Endothelial cell of umbilical vein (primary cell): ENCODE measurements at regions of chr4 and their contacts with region 1.

Region 1: GRCh38 chr4:90293320-90293719 is 166.1 kb downstream of the CCSER1 start:
- DNase-seq: peak; percentile 23
- H3K4me3 ChIP-seq: no peak overlapping the region
- H3K27ac ChIP-seq: no peak overlapping the region
- H3K4me1 ChIP-seq: no peaks in the 10 kb centered on the region
- H3K27me3 ChIP-seq: no peaks in the 10 kb centered on the region
- CTCF ChIP-seq: peak; percentile 11 to 13
- POLR2A ChIP-seq: no peak

Region 2: GRCh38 chr4:89434364-89434988 is 858.8 kb before region 1 on chr4:
- CTCF ChIA-PET with region 1: interaction called, 5 read pairs
- POLR2A ChIA-PET with region 1: no interaction called
- dilution Hi-C with region 1: no loop called
- intact Hi-C with region 1: loop called (anchors 5 kb)
- DNase-seq: peak; percentile 46
- H3K4me3 ChIP-seq: no peak overlapping the region
- H3K27ac ChIP-seq: no peak overlapping the region
- H3K4me1 ChIP-seq: no peaks in the 10 kb centered on the region
- H3K27me3 ChIP-seq: peaks cover 0 to 2% of the 10 kb centered on the region in 2 experiments
- CTCF ChIP-seq: peak; percentile 38 to 62
- POLR2A ChIP-seq: no peak

Region 3: DNA sequence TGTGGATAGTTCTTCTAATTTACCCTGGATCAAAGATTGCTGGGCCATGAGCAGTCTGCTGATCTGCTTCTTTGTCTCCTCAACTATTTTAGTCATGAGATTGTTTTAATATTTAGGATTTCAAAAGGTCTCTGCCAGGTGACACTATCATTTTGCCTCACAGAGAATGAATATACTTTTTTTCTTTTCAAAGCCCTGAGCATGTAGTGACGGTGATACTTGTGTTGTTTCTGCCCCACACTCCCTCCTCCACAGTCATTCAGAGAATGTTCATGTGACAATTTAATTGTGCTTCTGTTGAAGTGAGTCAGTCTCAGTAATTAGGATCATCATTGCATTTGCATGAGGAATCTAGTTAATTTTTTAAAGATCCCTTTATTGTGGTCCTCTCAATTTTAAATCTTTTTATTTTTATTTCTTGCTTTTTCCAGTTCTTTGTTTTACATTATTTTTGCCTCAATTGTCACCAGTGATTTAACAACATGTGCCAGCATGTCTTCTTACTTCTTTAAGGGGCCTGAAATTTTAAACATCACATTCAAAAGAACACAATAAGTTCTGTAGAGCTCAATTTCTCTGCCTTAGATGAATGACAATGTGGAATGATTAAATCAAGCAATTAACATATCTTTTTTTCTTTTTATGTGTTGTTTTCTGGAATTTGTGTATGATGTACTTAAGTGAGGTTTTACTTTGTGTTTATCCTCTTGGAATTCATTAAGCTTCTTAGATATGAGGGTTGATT is 386.4 kb before region 1 on chr4:
- CTCF ChIA-PET with region 1: no interaction called
- POLR2A ChIA-PET with region 1: no interaction called
- dilution Hi-C with region 1: no loop called
- intact Hi-C with region 1: loop called (anchors 10 kb)
- DNase-seq: peak; percentile 45
- H3K4me3 ChIP-seq: no peak overlapping the region
- H3K27ac ChIP-seq: no peak overlapping the region
- H3K4me1 ChIP-seq: peaks cover 28% of the 10 kb centered on the region
- H3K27me3 ChIP-seq: no peaks in the 10 kb centered on the region
- CTCF ChIP-seq: no peak
- POLR2A ChIP-seq: no peak

Region 4: GRCh38 chr4:90025248-90025647 is 268.1 kb before region 1 on chr4:
- CTCF ChIA-PET with region 1: interaction called, 19 read pairs
- POLR2A ChIA-PET with region 1: no interaction called
- dilution Hi-C with region 1: no loop called
- intact Hi-C with region 1: loop called (anchors 1 kb)
- DNase-seq: peak; percentile 44
- H3K4me3 ChIP-seq: no peak overlapping the region
- H3K27ac ChIP-seq: no peak overlapping the region
- H3K4me1 ChIP-seq: no peaks in the 10 kb centered on the region
- H3K27me3 ChIP-seq: peaks cover 0 to 3% of the 10 kb centered on the region in 2 experiments
- CTCF ChIP-seq: no peak
- POLR2A ChIP-seq: no peak

Region 5: DNA sequence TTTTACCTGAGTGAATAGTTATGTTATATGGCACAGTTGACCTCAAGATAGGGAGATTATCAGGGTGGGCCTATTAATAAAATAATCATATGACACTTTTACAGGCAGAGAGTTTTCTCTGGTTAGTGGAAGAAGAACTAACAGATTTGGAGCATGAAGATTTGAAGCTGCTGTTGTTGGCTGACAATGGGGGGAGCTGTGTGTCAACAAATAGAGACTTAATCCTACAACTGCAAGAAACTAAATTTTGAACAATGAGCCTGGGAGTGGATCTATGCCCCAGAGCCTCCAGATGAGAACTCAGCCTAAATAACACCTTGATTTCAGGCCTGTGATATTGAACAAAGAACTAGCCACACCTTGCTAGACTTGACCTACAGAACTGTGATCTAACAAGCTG is 173.3 kb before region 1 on chr4:
- CTCF ChIA-PET with region 1: interaction called, 17 read pairs
- POLR2A ChIA-PET with region 1: no interaction called
- dilution Hi-C with region 1: no loop called
- intact Hi-C with region 1: loop called (anchors 1 kb)
- DNase-seq: peak; percentile 23
- H3K4me3 ChIP-seq: no peak overlapping the region
- H3K27ac ChIP-seq: no peak overlapping the region
- H3K4me1 ChIP-seq: peaks cover 3% of the 10 kb centered on the region
- H3K27me3 ChIP-seq: no peaks in the 10 kb centered on the region
- CTCF ChIP-seq: peak in 1 of 2 donors; percentile 10
- POLR2A ChIP-seq: no peak

Region 6: GRCh38 chr4:90209922-90210321 is 83.4 kb before region 1 on chr4:
- CTCF ChIA-PET with region 1: no interaction called
- POLR2A ChIA-PET with region 1: no interaction called
- dilution Hi-C with region 1: no loop called
- intact Hi-C with region 1: loop called (anchors 2 kb)
- DNase-seq: peak; percentile 95
- H3K4me3 ChIP-seq: peak overlapping the region in 1 of 3 experiments; percentile 21
- H3K27ac ChIP-seq: peak overlapping the region; percentile 53
- H3K4me1 ChIP-seq: peaks cover 22% of the 10 kb centered on the region
- H3K27me3 ChIP-seq: no peaks in the 10 kb centered on the region
- CTCF ChIP-seq: no peak
- POLR2A ChIP-seq: no peak